ENCODE measurements at regions of chr4 and their contacts with region 1.

Region 1: DNA sequence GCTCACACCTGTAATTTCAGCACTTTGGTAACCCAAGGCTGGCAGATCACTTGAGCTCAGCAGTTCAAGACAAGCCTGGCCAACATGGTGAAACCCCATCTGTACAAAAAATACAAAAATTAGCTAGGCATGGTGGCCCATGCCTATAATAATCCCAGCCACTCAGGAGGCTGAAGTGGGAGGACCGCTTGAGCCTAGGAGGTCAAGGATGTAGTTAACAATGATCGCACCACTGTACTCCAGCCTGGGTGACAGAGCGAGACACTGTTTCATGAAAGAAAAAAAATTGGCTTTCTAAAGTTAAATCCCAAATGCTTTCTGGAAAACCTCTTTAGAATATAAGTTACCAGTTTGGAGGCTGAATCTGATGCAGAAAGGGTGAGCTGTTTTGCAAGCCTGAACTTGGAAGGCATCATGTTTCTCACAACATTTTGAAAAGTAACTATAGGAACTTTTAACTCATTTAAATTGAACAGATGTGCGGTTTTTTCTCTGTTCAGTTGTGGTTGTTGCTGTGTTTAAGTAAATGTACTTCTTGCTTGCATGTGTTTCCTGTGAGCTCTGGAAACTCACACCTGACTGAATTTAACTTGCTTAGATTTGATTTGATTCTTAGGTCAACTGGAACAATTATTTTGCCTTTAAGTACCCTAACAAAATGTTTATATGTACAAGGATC is 39.8 kb upstream of the TMEM131L start:
- H3K4me3 Mint-ChIP-seq: no peak overlapping the region
- H3K27ac Mint-ChIP-seq: no peak overlapping the region
- H3K4me1 Mint-ChIP-seq: no peaks in the 10 kb centered on the region
- H3K27me3 Mint-ChIP-seq: peaks cover 42% of the 10 kb centered on the region

Region 2: DNA sequence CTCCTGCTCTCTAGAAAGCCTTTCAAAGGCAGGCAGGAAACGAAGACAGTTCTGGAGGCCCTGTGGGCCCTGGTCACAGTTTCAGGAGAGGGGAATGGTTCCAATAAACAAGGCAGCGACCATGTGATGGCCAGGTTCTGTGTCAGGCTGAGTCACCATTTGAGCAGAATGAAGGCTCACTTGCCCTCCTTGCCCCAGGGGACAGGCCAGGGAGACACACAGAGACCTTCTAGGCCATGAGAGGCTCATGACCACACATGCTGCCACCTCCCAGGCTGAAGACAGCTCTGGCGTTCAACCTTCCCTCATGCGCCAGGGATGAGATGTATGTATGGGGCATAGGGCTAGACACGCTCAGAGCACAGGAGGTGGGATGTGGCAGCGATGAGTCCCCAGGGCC is 245.1 kb before region 1 on chr4:
- intact Hi-C with region 1: no loop called
- H3K4me3 Mint-ChIP-seq: no peak overlapping the region
- H3K27ac Mint-ChIP-seq: no peak overlapping the region
- H3K4me1 Mint-ChIP-seq: no peaks in the 10 kb centered on the region
- H3K27me3 Mint-ChIP-seq: no peaks in the 10 kb centered on the region

Region 3: GRCh38 chr4:153466081-153466948 is 40.0 kb after region 1 on chr4 and contains the start of gene TMEM131L:
- intact Hi-C with region 1: no loop called
- H3K4me3 Mint-ChIP-seq: peak within 1 kb of the TSS; percentile 91
- H3K27ac Mint-ChIP-seq: peak within 1 kb of the TSS; percentile 79
- H3K4me1 Mint-ChIP-seq: peaks cover 42% of the 10 kb centered on the region
- H3K27me3 Mint-ChIP-seq: peaks cover 12% of the 10 kb centered on the region

Region 4: DNA sequence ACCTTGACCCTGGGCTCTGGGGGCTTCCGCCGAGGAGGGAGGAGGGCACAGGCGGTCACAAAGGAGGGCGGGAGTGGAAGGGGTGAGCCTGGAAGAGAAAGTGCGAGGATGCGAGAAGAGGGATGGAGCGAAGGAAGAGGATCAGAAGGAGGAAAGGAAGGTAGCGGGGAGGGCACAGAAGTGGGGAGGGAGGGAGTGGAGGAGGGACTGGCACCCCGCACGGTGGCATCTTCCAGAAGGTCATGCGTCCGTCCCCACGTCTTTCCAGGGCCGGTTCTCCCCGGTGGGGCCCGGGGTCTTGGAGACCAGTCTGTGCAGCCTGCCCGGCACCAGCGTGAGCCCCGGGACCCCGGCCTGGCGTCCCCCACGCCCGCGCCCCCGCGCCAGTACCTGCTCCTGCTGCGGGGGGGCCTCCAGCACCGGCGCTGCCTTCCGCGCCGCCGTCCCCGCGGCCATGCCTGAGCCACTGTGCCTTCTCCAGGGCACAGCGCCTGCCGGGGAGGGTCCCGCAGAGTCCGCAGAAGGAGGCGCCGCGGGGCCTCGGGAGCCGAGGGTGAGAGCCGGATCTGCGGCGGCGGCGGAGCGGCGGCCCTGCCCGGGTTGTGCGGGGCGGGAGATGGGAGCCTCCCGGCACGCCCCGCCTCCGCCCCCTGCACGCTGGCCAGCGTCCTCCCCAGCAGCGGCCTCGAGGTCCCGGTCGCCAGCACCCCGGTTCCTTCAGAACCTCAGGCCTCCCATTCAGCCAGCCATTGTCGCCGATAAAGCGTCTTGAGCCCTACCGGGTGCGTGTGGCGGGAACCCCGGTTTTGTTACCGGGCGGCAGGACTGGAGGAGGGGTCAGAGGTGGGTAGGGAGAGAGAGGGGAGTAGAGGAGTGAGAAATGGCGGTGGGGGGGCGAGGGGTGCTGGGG is 333.3 kb after region 1 on chr4 and contains the start of gene RNF175:
- intact Hi-C with region 1: loop called (anchors 5 kb)
- H3K4me3 Mint-ChIP-seq: peak within 1 kb of the TSS; percentile 71
- H3K27ac Mint-ChIP-seq: no peak within 1 kb of the TSS
- H3K4me1 Mint-ChIP-seq: peaks cover 33% of the 10 kb centered on the region
- H3K27me3 Mint-ChIP-seq: peaks cover 60% of the 10 kb centered on the region

Region 5: GRCh38 chr4:153962311-153963039 is 536.1 kb after region 1 on chr4:
- intact Hi-C with region 1: no loop called
- H3K4me3 Mint-ChIP-seq: no peak overlapping the region
- H3K27ac Mint-ChIP-seq: no peak overlapping the region
- H3K4me1 Mint-ChIP-seq: no peaks in the 10 kb centered on the region
- H3K27me3 Mint-ChIP-seq: peaks cover 1% of the 10 kb centered on the region

Measured in dendritic cell treated with granulocyte-macrophage colony-stimulating factor and Interleukin-4, amounts not matched to agents 40 ng/mL and 50 ng/mL, for 4 days (primary cell).